Gastrocnemius medialis (tissue), 4 donors: ENCODE measurements at regions of chr11 and their contacts with region 1.

Region 1: DNA sequence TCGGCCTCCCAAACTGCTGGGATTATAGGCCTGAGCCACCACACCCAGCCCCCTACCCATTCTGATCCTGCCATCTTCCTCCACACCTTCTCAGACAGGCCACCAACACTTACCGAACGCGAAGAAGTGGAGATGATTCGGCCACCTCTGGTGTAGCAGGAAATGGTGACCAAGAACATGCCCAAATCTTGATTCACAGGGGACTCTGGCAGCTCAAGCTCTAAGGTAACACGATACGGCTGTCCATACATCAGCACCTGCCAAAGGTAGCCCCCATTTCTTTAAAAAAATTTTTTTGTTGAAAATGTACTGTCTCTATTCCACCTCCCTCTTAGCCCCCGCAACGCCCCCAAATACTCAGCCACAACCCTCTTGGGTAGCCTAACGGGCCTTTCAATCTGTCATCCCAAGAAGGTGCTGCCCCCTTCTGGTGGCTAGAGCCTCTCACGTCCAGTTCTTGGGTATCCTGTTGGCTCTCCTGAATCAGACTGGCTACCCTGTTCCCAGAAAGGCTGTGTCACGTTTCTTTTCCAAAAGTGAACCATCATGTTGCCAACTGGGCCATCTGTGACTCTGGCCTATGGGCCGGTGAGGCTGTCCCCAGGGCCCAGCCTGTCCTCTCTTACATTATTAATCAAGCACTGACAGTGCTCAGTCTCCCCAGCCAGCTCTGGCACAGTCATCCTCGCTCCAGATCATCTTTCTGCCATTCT is 5.3 kb upstream of the LRRN4CL start:
- DNase-seq: peak; percentile 84 to 92
- ATAC-seq: peak; percentile 98 to 99
- H3K4me3 ChIP-seq: no peak overlapping the region
- H3K27ac ChIP-seq: peak overlapping the region; percentile 65 to 88 (median 84)
- H3K4me1 ChIP-seq: peaks cover 20 to 27% of the 10 kb centered on the region in 2 donors
- H3K27me3 ChIP-seq: no peaks in the 10 kb centered on the region
- CTCF ChIP-seq: peak; percentile 85 to 90 (median 88)
- POLR2A ChIP-seq: peak in 1 of 2 donors; percentile 24

Region 2: DNA sequence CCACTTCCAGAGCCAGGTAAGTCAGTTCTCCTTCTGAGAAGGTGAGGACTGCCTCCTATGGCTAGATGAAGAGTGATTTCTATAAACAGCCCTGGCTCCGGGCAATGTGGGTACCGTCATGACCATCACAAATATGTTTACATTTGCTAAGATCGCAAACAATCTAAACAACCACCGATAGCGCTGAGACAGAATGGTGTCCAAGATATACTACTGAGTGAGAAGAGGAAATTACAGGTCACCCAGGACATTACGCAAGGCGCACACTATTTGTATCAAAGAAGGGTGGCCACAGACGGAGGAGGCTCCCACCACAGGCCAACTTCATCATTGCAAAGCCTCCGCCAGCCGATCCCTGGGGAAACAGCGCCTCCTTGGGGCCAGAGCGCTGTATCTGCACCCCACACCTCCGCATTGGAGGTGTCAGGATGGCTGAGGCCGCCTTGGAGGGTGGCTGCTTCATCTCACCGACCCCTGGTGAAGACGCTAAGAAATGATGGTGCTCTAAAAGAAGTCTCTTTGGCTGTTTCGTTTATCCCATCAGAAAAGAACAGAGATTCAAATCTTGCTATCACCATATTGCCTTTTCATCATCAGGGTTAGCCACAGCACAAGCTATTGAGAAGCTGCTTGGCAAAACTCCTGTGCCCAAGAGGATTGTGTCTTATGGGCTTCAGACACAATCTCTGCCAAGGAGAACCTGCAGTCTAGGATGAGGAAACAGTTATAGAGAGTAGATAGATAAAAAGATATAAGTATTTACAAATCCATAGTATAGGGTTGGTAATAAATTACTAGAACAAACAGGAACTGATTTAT is 369.7 kb before region 1 on chr11:
- in situ Hi-C with region 1: no loop called
- intact Hi-C with region 1: no loop called
- DNase-seq: no peak
- ATAC-seq: no peak
- H3K4me3 ChIP-seq: no peak overlapping the region
- H3K27ac ChIP-seq: no peak overlapping the region
- H3K4me1 ChIP-seq: no peaks in the 10 kb centered on the region
- H3K27me3 ChIP-seq: peaks cover 0 to 4% (median 0%) of the 10 kb centered on the region in 3 donors
- CTCF ChIP-seq: peak; percentile 11 to 38 (median 29)
- POLR2A ChIP-seq: no peak

Region 3: GRCh38 chr11:62383822-62384221 is 310.8 kb before region 1 on chr11:
- in situ Hi-C with region 1: loop called in 3 of 4 experiments (anchors 10 to 25 kb)
- intact Hi-C with region 1: no loop called
- DNase-seq: no peak
- ATAC-seq: no peak
- H3K4me3 ChIP-seq: no peak overlapping the region
- H3K27ac ChIP-seq: no peak overlapping the region
- H3K4me1 ChIP-seq: peaks cover 5 to 7% of the 10 kb centered on the region in 2 donors
- H3K27me3 ChIP-seq: no peaks in the 10 kb centered on the region
- CTCF ChIP-seq: no peak
- POLR2A ChIP-seq: no peak

Region 4: DNA sequence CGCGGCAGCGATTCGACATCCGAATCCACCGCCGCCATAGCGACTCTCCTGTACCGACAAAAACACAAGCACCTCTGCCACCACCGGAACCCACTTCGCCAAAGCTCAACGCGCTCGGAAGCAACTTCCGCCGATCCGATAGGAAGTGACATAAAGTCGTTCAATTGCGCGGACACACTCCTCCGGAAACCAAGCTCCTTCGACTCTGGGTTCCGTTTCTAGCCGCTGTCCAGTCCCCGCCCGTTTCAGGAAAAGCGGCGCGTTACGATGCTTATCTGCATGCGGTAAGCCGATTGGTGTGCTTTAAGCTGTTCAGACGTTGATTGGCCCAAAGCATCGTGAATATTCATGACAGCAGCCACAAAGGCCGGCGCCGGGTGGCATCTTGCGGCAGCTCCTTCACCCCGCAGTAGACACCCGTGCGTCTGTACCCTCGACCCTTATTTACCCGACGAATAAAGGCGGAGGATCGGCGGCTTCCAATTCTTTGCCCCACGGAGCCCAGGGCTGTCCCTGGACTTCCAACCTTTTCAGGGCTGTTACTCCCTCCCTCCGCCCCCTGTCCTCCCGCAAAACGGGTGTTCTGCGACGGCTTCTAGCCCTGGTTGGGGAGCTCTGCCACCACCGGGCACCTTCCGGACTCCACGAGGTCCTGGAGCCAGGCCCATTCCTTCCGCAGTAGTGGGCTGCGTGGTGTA is 103.0 kb before region 1 on chr11 and contains the start of gene TUT1:
- in situ Hi-C with region 1: no loop called
- intact Hi-C with region 1: loop called (anchors 2 kb)
- DNase-seq: peak; percentile 98
- ATAC-seq: peak; percentile 94 to 96
- H3K4me3 ChIP-seq: peak within 1 kb of the TSS; percentile 69 to 91 (median 84)
- H3K27ac ChIP-seq: peak within 1 kb of the TSS; percentile 94 to 99 (median 96)
- H3K4me1 ChIP-seq: peaks cover 26% of the 10 kb centered on the region in 2 donors
- H3K27me3 ChIP-seq: no peaks in the 10 kb centered on the region
- CTCF ChIP-seq: no peak
- POLR2A ChIP-seq: peak; percentile 94 to 98
- total RNA-seq, gene TUT1: 7.8 to 15.7 (median 11.7) TPM

Region 5: GRCh38 chr11:62612366-62613290 is 82.0 kb before region 1 on chr11 and contains the starts of genes EML3 and ROM1:
- in situ Hi-C with region 1: no loop called
- intact Hi-C with region 1: loop called (anchors 5 kb)
- DNase-seq: peak; percentile 80 to 82
- ATAC-seq: peak; percentile 82 to 83
- H3K4me3 ChIP-seq: peak within 1 kb of the TSS; percentile 71 to 93 (median 86)
- H3K27ac ChIP-seq: peak within 1 kb of the TSS; percentile 90 to 95 (median 92)
- H3K4me1 ChIP-seq: peaks cover 16 to 21% of the 10 kb centered on the region in 2 donors
- H3K27me3 ChIP-seq: no peaks in the 10 kb centered on the region
- CTCF ChIP-seq: peak in 4 of 5 experiments; percentile 91 to 99 (median 94)
- POLR2A ChIP-seq: no peak
- total RNA-seq, gene EML3: 4.7 to 7.9 (median 7.0) TPM
- total RNA-seq, gene ROM1: 1.6 to 3.7 (median 2.7) TPM

Region 6: GRCh38 chr11:62627714-62628113 is 66.9 kb before region 1 on chr11:
- in situ Hi-C with region 1: no loop called
- intact Hi-C with region 1: no loop called
- DNase-seq: no peak
- ATAC-seq: no peak
- H3K4me3 ChIP-seq: no peak overlapping the region
- H3K27ac ChIP-seq: no peak overlapping the region
- H3K4me1 ChIP-seq: no peaks in the 10 kb centered on the region
- H3K27me3 ChIP-seq: no peaks in the 10 kb centered on the region
- CTCF ChIP-seq: no peak
- POLR2A ChIP-seq: no peak

Region 7: DNA sequence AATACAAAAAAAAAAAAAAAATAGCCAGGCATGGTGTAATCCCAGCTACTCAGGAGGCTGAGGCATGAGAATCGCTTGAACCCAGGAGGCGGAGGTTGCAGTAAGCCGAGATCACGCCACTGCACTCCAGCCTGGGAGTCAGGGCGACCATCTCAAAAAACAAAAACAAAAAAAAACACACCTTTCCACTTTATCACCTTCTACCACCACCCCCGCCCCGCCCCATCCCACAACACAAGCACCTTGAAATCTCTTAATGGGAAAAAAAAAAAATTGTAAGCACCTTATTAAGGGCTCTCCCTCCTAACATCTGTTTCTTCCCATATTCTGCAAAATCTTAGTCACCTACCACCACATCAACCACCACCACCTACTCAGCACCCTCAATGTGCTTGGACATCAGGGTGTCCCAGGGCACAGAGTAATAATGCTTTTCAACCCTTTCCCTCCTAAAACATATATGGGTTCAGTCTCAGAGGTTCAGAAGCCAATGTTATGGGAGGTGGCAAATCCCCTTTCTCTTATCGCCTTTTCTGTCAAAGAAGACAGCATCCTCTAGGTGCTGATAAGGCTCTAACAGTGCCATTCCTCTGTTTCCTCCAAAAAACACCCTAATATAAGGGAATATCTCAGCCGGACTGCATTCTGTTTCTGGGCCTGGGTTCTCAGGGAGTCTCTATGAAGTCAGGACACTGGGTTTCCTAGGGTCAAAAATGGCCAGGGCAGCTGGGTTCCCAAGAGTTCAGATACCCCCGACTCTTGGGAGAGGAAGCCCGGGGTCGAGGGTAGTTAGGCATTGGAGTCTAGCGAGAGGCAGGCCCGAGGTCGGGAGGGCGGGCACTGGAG is 42.2 kb before region 1 on chr11:
- in situ Hi-C with region 1: no loop called
- intact Hi-C with region 1: loop called (anchors 2 kb)
- DNase-seq: no peak
- ATAC-seq: no peak
- H3K4me3 ChIP-seq: peak overlapping the region; percentile 78 to 91 (median 86)
- H3K27ac ChIP-seq: peak overlapping the region; percentile 89 to 95 (median 92)
- H3K4me1 ChIP-seq: peaks cover 13 to 18% of the 10 kb centered on the region in 2 donors
- H3K27me3 ChIP-seq: no peaks in the 10 kb centered on the region
- CTCF ChIP-seq: no peak
- POLR2A ChIP-seq: no peak

Region 8: DNA sequence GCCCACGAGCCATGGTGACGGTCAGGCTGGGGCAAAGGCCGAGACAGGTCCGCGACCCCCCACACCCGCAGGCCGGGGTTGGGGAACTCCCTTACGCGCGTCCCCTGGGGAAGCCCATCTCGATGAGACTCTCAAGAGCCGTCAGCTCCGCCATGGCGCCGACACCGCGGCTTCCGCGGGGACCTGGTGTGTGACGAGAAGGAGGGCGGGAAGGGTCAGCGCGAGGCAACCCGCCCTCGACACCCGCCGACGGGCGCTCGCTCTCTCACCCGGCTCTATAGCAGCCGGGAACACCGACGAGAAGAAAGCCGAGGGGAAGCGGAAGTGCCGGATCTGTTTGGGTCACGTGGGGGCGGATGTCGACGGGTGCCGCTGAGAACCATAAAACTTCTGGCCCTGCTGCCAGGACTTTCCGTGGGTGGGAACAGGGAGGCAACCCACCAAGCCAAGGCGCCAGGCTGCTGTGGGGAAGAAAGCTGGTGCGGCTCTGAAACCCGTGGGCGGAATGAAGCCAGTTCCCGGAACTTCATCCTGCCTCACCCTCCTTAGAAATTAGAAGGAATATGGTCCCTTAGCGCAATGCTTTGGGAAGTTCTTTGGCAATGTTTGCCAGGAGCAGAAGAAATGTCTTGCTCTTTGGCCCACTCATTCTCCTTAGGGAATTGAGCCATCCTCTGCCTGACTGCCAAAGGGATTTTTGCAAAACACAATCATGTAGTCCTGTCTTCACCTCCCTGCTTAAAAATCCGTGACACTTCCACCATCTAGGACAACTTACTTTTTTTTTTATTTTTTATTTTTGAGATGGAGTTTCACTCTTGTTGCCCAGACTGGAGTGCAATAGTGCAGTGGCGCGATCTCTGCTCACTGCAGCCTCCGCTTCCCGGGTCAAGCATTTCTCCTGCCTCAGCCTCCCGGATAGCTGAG is 15.6 kb before region 1 on chr11 and contains the start of gene UBXN1:
- in situ Hi-C with region 1: no loop called
- intact Hi-C with region 1: loop called (anchors 1 kb)
- DNase-seq: peak; percentile 87 to 92
- ATAC-seq: peak; percentile 83 to 85
- H3K4me3 ChIP-seq: peak within 1 kb of the TSS; percentile 91 to 98 (median 93)
- H3K27ac ChIP-seq: peak within 1 kb of the TSS; percentile 88 to 97 (median 94)
- H3K4me1 ChIP-seq: peaks cover 21 to 44% of the 10 kb centered on the region in 2 donors
- H3K27me3 ChIP-seq: no peaks in the 10 kb centered on the region
- CTCF ChIP-seq: no peak
- POLR2A ChIP-seq: peak; percentile 75 to 85
- total RNA-seq, gene UBXN1: 216 to 450 (median 265) TPM